ENCODE measurements at regions of chr6 and their contacts with region 1.

Region 1: GRCh38 chr6:125314019-125314581 is 12.3 kb upstream of the HDDC2 start:
- DNase-seq: peak; percentile 84

Region 2: GRCh38 chr6:125153391-125154117 is 160.5 kb before region 1 on chr6 and contains the start of gene TPD52L1:
- intact Hi-C with region 1: loop called in 1 of 2 experiments (anchors 5 kb)
- DNase-seq: peak; percentile 92
- total RNA-seq, gene TPD52L1: 41.4 to 51.7 TPM

Region 3: GRCh38 chr6:125182237-125183008 is 131.7 kb before region 1 on chr6:
- intact Hi-C with region 1: no loop called
- DNase-seq: no peak

Region 4: DNA sequence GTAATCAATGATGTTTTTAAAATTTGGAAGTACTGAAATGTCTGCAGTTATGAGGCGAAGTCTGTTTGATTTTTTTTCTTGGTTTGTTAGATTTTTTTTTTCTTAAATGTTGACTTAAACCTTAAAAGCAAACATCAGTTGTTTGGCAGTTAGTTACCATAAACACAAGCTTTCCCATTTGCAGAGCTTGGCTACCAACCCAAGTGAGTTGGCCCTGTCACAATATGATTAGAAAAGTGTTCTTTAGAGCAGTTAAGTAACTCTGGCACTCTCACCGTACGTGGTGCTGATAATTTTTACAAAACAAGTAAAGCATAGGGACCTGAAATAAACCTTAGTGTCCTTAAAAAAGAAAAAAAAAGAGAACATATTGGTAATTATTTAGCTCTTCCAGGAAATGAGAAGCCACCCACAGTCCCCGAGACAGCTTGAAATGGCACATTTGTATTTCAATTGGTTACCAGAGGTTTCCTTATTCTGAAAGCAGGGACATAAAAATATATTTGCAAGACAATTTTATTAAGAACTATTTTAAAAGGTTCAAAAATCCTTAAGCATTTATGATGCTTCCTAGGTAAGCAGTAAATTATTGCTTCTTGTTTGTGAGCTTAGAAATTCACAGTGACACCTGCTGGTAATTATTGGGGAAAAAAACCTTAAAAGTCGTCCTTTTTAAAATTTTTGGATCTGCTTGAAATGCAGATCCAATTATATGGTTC is 439.3 kb after region 1 on chr6:
- intact Hi-C with region 1: loop called (anchors 5 kb)
- DNase-seq: no peak

Region 5: DNA sequence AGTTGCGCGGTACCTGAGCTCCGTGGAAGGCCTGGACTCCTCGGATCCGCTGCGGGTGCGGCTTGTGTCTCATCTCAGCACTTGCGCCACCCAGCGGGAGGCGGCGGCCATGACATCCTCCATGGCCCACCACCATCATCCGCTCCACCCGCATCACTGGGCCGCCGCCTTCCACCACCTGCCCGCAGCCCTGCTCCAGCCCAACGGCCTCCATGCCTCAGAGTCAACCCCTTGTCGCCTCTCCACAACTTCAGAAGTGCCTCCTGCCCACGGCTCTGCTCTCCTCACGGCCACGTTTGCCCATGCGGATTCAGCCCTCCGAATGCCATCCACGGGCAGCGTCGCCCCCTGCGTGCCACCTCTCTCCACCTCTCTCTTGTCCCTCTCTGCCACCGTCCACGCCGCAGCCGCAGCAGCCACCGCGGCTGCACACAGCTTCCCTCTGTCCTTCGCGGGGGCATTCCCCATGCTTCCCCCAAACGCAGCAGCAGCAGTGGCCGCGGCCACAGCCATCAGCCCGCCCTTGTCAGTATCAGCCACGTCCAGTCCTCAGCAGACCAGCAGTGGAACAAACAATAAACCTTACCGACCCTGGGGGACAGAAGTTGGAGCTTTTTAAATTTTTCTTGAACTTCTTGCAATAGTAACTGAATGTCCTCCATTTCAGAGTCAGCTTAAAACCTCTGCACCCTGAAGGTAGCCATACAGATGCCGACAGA is 445.2 kb after region 1 on chr6:
- intact Hi-C with region 1: loop called (anchors 5 kb)
- DNase-seq: no peak

Region 6: DNA sequence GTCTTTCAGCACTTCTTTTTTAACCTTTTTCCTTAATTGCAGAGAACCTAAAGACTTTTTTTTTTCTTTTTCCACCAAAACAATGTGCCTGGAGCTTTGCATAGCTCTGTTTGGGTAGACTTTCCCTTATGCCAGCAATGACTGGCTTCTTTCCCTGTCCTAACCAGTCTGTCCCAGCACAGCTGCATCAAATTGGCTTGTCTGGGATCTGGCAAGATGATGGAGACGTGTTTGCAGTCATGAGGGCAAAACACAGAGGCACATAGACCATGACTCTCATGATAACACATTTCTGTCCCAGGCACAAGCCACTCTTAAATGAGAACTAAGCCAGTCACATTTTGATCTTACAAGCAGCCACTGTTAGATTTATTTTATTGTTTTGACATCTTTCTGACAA is 451.8 kb after region 1 on chr6:
- intact Hi-C with region 1: loop called in 1 of 2 experiments (anchors 5 kb)
- DNase-seq: no peak

Region 7: DNA sequence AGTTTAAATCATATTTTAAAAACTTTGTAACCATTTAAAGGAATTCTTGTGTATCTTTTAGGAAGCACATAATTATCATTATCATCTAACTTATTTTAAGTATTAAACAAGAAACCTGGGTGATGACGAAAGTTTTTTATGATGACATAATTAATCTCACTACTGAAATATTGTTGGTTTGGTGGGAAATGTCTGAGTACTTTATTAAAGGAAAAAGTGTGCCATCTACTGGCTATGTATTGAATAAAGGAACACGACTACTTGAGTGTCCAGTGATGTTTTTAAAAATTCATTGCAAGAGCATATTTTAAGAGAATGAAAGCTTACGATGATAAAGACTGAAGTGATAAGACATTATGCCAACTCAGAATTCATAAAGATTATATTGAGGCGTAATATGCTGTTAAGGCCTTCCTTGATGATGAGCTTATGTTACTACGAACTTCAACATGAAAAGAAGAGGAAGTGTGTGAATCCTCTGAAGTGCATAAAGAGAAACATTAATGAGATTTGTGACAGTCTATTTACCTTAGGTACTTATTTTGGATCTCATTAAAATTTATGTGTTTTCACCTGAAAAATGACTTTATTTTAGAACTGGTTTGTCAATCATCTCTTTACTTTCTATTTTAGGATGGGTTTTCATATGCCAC is 660.2 kb after region 1 on chr6:
- intact Hi-C with region 1: loop called in 1 of 2 experiments (anchors 5 kb)
- DNase-seq: no peak

Measured in posterior vena cava (tissue), 2 donors.